ENCODE measurements at regions of chr4 and their contacts with region 1.

Region 1: DNA sequence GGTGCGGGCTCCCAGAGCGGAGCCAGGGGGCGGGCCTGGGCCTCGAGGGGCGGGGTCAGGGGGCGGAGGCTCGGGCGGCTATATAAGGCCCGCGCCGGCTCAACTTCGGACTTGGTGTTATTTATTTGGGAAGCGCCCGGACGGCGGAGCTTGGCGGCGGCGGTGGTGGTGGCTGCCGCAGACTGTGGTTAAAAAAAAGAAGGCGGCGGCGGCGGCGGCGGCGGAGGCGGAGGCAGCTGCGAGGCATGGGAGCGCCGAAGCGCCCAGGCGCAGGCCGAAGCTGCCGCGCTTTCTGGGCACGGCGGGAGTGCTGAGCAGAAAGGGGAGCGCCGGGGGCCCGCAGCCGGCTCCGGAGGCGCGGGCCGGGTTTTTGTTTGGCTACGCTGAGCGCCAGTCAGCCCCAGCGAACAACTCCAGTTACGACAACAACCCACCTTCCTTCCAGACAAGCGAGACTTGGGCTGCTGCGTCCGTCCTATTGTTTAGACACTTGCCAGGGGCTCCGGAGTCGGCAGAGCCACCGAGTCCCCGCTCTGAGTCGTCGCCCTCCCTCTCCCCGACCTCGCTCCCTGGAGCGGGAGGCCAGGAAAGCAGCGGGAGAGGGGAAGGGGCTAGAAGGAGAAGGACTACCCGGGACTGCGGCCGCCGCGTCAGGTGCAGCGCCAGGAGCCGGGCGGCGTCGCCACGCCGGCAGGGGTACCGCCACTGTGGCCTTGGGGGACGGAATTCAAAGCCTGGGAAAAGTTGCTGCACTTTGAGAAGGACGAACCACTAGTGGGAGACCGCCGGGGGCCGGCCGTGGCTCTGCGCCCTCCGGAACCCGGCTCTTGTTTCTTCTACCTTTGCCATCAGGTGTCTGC is at the start of gene SLIT2:
- DNase-seq: peak in 1 of 2 experiments; percentile 93
- H3K4me3 ChIP-seq: peak within 1 kb of the TSS; percentile 78 to 86 (median 80)
- H3K27ac ChIP-seq: no peak within 1 kb of the TSS
- H3K4me1 ChIP-seq: peaks cover 2 to 27% (median 16%) of the 10 kb centered on the region in 4 experiments; a peak in 6 of 7 replicates
- H3K27me3 ChIP-seq: peaks cover 31 to 61% (median 48%) of the 10 kb centered on the region in 4 experiments
- CTCF ChIP-seq: no peak
- EP300 ChIP-seq: no peak
- POLR2A ChIP-seq: peak; percentile 76 to 77; a peak in 2 of 3 replicates
- RAD21 ChIP-seq: no peak
- total RNA-seq, gene SLIT2: 11.7 and 13.7 TPM in 2 replicates

Region 2: GRCh38 chr4:20086799-20087521 is 165.1 kb before region 1 on chr4:
- CTCF ChIA-PET with region 1: no interaction called
- POLR2A ChIA-PET with region 1: no interaction called
- DNase-seq: no peak
- H3K4me3 ChIP-seq: no peak overlapping the region
- H3K27ac ChIP-seq: no peak overlapping the region; the same call in 1 of the 2 replicates
- H3K4me1 ChIP-seq: no peaks in the 10 kb centered on the region
- H3K27me3 ChIP-seq: no peaks in the 10 kb centered on the region
- CTCF ChIP-seq: no peak
- EP300 ChIP-seq: no peak
- POLR2A ChIP-seq: no peak
- RAD21 ChIP-seq: no peak

Region 3: GRCh38 chr4:20237894-20238537 is 14.0 kb before region 1 on chr4:
- CTCF ChIA-PET with region 1: interaction called, 16 read pairs
- POLR2A ChIA-PET with region 1: interaction called, 3 read pairs
- DNase-seq: no peak
- H3K4me3 ChIP-seq: no peak overlapping the region
- H3K27ac ChIP-seq: no peak overlapping the region
- H3K4me1 ChIP-seq: no peaks in the 10 kb centered on the region
- H3K27me3 ChIP-seq: no peaks in the 10 kb centered on the region
- CTCF ChIP-seq: no peak
- EP300 ChIP-seq: no peak
- POLR2A ChIP-seq: no peak
- RAD21 ChIP-seq: no peak

Region 4: DNA sequence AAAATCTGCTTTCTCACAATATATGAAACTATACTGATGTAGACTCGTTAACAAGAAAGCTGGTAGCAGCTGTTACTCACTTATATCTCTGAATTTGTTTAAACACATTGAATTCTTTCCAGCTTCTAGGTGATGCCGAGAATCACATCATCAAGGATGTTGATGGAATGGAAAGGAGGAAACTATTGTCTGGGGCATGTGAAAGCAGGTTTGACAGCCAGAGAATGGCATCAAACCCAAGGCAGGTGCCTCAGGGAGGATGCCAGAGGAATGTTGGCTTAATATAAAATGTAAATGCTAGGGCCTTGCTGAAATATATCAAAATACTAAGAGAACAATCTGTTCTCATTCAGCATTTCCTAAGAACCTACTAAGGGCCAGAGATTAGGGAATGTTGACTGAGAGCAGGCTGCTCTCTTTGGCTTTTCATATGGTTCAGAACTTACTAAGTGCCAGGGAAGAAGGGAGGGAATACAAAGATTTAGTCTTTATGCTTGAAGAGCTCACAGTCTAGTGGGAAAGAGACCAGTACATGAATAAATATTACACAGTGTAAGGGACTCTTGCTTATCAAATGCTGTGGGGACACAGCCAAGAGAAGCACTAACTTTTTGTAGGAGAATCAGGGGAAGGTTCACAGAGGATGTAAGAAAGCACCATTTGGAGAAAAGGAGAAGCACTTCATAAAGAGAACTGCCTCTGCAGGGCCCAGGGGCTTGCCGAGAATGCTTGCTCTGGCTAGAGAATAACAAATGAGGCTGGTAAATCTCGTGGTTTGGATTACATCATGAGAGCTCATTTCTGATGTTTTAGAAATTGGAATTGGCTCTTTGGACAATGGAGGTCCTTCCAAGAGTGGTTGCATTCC is 14.4 kb after region 1 on chr4:
- CTCF ChIA-PET with region 1: interaction called, 7 read pairs
- POLR2A ChIA-PET with region 1: interaction called, 19 read pairs
- DNase-seq: no peak
- H3K4me3 ChIP-seq: no peak overlapping the region
- H3K27ac ChIP-seq: no peak overlapping the region
- H3K4me1 ChIP-seq: no peaks in the 10 kb centered on the region
- H3K27me3 ChIP-seq: no peaks in the 10 kb centered on the region
- CTCF ChIP-seq: no peak
- EP300 ChIP-seq: no peak
- POLR2A ChIP-seq: no peak
- RAD21 ChIP-seq: no peak

Region 5: GRCh38 chr4:20283039-20283438 is 31.0 kb after region 1 on chr4:
- CTCF ChIA-PET with region 1: interaction called, 7 read pairs
- POLR2A ChIA-PET with region 1: interaction called, 10 read pairs
- DNase-seq: peak; percentile 54 to 58
- H3K4me3 ChIP-seq: peak overlapping the region in 1 of 4 experiments; percentile 6; a peak in 1 of 8 replicates
- H3K27ac ChIP-seq: no peak overlapping the region
- H3K4me1 ChIP-seq: peaks cover 0 to 7% (median 6%) of the 10 kb centered on the region in 4 experiments; a peak in 4 of 7 replicates
- H3K27me3 ChIP-seq: no peaks in the 10 kb centered on the region
- CTCF ChIP-seq: no peak
- EP300 ChIP-seq: no peak
- POLR2A ChIP-seq: no peak
- RAD21 ChIP-seq: no peak

Measured in H1 (cell line).